CD8-positive, alpha-beta T cell (primary cell): ENCODE measurements at regions of chr1 and their contacts with region 1.

Region 1: GRCh38 chr1:100866041-100866900 is 28.4 kb downstream of the EXTL2 start:
- DNase-seq: peak in 2 of 9 experiments; percentile 40 to 57
- ATAC-seq: no peak
- H3K4me3 ChIP-seq: no peak overlapping the region
- H3K4me3 Mint-ChIP-seq: no peak overlapping the region
- H3K27ac ChIP-seq: no peak overlapping the region
- H3K27ac Mint-ChIP-seq: no peak overlapping the region
- H3K4me1 ChIP-seq: no peaks in the 10 kb centered on the region
- H3K4me1 Mint-ChIP-seq: no peaks in the 10 kb centered on the region
- H3K27me3 ChIP-seq: peaks cover 0 to 3% of the 10 kb centered on the region in 2 experiments
- H3K27me3 Mint-ChIP-seq: no peaks in the 10 kb centered on the region
- CTCF ChIP-seq: peak; percentile 50

Region 2: DNA sequence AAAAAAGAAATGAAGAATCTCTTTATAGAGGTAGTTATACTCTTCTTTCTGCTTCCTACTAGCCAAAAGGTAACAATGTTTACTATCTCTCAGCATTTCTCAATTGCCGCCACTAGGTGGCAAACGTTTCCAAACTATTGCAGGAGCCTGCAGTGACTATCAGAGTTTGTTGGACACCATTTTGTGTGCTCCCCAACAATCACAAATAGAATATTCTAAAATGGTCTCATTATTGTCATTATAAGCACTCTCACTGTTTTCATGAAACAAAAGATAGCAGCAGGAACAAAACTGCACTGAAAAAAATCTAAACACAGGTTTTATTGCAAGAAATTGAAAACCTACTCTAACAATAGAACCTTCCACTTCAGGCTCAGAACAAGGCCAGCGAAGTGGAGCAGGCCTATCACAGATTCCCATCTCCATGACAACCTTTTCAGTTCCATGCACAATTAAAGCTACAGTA is 1685.9 kb before region 1 on chr1:
- CTCF ChIA-PET with region 1: no interaction called
- POLR2A ChIA-PET with region 1: no interaction called
- intact Hi-C with region 1: loop called in 1 of 2 experiments (anchors 2 kb)
- DNase-seq: peak; percentile 13 to 71 (median 53)
- ATAC-seq: peak; percentile 61
- H3K4me3 ChIP-seq: no peak overlapping the region
- H3K4me3 Mint-ChIP-seq: no peak overlapping the region
- H3K27ac ChIP-seq: no peak overlapping the region
- H3K27ac Mint-ChIP-seq: no peak overlapping the region
- H3K4me1 ChIP-seq: no peaks in the 10 kb centered on the region
- H3K4me1 Mint-ChIP-seq: no peaks in the 10 kb centered on the region
- H3K27me3 ChIP-seq: no peaks in the 10 kb centered on the region
- H3K27me3 Mint-ChIP-seq: peaks cover 4% of the 10 kb centered on the region
- CTCF ChIP-seq: peak; percentile 97

Region 3: GRCh38 chr1:99808391-99809115 is 1057.7 kb before region 1 on chr1:
- CTCF ChIA-PET with region 1: interaction called, 10 read pairs
- POLR2A ChIA-PET with region 1: no interaction called
- intact Hi-C with region 1: loop called (anchors 1 kb)
- DNase-seq: peak in 4 of 9 experiments; percentile 15 to 81 (median 54)
- ATAC-seq: peak; percentile 79
- H3K4me3 ChIP-seq: no peak overlapping the region
- H3K4me3 Mint-ChIP-seq: no peak overlapping the region
- H3K27ac ChIP-seq: no peak overlapping the region
- H3K27ac Mint-ChIP-seq: no peak overlapping the region
- H3K4me1 ChIP-seq: no peaks in the 10 kb centered on the region
- H3K4me1 Mint-ChIP-seq: peaks cover 4% of the 10 kb centered on the region
- H3K27me3 ChIP-seq: peaks cover 0 to 2% of the 10 kb centered on the region in 2 experiments
- H3K27me3 Mint-ChIP-seq: peaks cover 3% of the 10 kb centered on the region
- CTCF ChIP-seq: peak; percentile 85

Region 4: GRCh38 chr1:100277866-100278265 is 588.4 kb before region 1 on chr1:
- CTCF ChIA-PET with region 1: no interaction called
- POLR2A ChIA-PET with region 1: no interaction called
- intact Hi-C with region 1: loop called in 1 of 2 experiments (anchors 5 kb)
- DNase-seq: peak in 4 of 9 experiments; percentile 12 to 56 (median 40)
- ATAC-seq: peak; percentile 77
- H3K4me3 ChIP-seq: no peak overlapping the region
- H3K4me3 Mint-ChIP-seq: no peak overlapping the region
- H3K27ac ChIP-seq: no peak overlapping the region
- H3K27ac Mint-ChIP-seq: no peak overlapping the region
- H3K4me1 ChIP-seq: no peaks in the 10 kb centered on the region
- H3K4me1 Mint-ChIP-seq: peaks cover 38% of the 10 kb centered on the region
- H3K27me3 ChIP-seq: no peaks in the 10 kb centered on the region
- H3K27me3 Mint-ChIP-seq: no peaks in the 10 kb centered on the region
- CTCF ChIP-seq: no peak

Region 5: GRCh38 chr1:100530880-100531487 is 335.3 kb before region 1 on chr1:
- CTCF ChIA-PET with region 1: no interaction called
- POLR2A ChIA-PET with region 1: no interaction called
- intact Hi-C with region 1: loop called (anchors 2 to 10 kb)
- DNase-seq: peak in 2 of 9 experiments; percentile 38 to 62
- ATAC-seq: peak; percentile 93
- H3K4me3 ChIP-seq: no peak overlapping the region
- H3K4me3 Mint-ChIP-seq: peak overlapping the region; percentile 56
- H3K27ac ChIP-seq: no peak overlapping the region
- H3K27ac Mint-ChIP-seq: peak overlapping the region; percentile 73
- H3K4me1 ChIP-seq: peaks cover 34% of the 10 kb centered on the region
- H3K4me1 Mint-ChIP-seq: peaks cover 38% of the 10 kb centered on the region
- H3K27me3 ChIP-seq: no peaks in the 10 kb centered on the region
- H3K27me3 Mint-ChIP-seq: peaks cover 2% of the 10 kb centered on the region
- CTCF ChIP-seq: no peak

Region 6: GRCh38 chr1:100611086-100611485 is 255.2 kb before region 1 on chr1:
- CTCF ChIA-PET with region 1: interaction called, 6 read pairs
- POLR2A ChIA-PET with region 1: no interaction called
- intact Hi-C with region 1: loop called in 1 of 2 experiments (anchors 2 kb)
- DNase-seq: no peak
- ATAC-seq: no peak
- H3K4me3 ChIP-seq: no peak overlapping the region
- H3K4me3 Mint-ChIP-seq: no peak overlapping the region
- H3K27ac ChIP-seq: no peak overlapping the region
- H3K27ac Mint-ChIP-seq: no peak overlapping the region
- H3K4me1 ChIP-seq: peaks cover 14% of the 10 kb centered on the region
- H3K4me1 Mint-ChIP-seq: peaks cover 18% of the 10 kb centered on the region
- H3K27me3 ChIP-seq: no peaks in the 10 kb centered on the region
- H3K27me3 Mint-ChIP-seq: peaks cover 3% of the 10 kb centered on the region
- CTCF ChIP-seq: no peak

Region 7: DNA sequence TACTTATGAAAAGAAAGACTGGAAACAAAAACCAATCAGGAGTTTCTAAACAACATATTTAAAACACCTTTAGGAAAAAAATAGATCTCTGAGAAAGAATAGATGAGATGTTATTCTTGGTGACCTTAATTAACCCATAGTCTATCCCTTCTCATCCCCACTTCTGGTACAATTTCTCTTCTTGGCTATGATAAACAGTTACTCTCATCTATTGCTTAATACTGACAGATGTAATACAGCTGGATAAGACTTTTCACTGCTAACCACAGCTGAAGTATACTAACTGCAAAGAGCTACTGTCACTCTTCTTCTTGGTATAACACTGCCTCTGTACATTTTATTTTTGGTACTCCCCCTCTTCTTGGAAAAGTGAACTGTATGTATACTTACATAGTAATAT is 13.2 kb after region 1 on chr1:
- CTCF ChIA-PET with region 1: interaction called, 14 read pairs
- POLR2A ChIA-PET with region 1: no interaction called
- intact Hi-C with region 1: no loop called
- DNase-seq: no peak
- ATAC-seq: no peak
- H3K4me3 ChIP-seq: no peak overlapping the region
- H3K4me3 Mint-ChIP-seq: no peak overlapping the region
- H3K27ac ChIP-seq: no peak overlapping the region
- H3K27ac Mint-ChIP-seq: no peak overlapping the region
- H3K4me1 ChIP-seq: no peaks in the 10 kb centered on the region
- H3K4me1 Mint-ChIP-seq: no peaks in the 10 kb centered on the region
- H3K27me3 ChIP-seq: no peaks in the 10 kb centered on the region
- H3K27me3 Mint-ChIP-seq: no peaks in the 10 kb centered on the region
- CTCF ChIP-seq: no peak